ENCODE measurements at regions of chrX and their contacts with region 1.

Region 1: GRCh38 chrX:134782796-134783195 is 124.5 kb upstream of the PLAC1 start:
- DNase-seq: no peak
- ATAC-seq: no peak

Region 2: DNA sequence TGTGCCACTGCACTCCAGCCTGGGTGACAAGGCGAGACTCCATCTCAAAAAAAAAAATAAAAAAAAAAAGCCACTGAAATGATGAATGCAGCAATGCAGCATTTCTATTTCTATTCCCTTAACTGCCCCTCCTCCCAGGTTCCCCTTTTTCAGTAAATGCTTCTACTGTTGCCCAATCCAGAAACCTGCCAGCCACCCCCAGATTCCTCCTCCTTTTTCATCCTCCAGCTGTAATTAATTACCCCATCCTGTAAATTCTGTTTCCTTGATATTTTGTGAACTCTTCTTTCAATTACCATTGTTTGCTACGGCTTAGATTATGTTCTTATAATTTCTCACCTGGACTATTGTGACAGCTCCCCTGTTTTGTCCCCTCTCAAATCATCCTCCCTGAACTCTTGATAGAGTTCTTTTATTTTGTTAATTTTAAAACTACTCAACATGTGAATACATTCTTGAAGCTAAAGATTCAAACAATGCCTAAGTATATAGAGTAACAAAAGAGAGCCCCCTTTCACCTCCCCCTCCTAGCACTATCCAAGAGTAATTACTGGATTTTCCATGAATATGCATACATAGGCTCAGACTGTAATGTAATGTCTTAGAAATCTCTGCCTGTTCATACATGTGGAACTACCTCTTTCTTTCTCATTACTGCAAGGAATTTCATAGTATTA is 1226.9 kb before region 1 on chrX:
- intact Hi-C with region 1: no loop called
- DNase-seq: no peak
- ATAC-seq: no peak

Region 3: DNA sequence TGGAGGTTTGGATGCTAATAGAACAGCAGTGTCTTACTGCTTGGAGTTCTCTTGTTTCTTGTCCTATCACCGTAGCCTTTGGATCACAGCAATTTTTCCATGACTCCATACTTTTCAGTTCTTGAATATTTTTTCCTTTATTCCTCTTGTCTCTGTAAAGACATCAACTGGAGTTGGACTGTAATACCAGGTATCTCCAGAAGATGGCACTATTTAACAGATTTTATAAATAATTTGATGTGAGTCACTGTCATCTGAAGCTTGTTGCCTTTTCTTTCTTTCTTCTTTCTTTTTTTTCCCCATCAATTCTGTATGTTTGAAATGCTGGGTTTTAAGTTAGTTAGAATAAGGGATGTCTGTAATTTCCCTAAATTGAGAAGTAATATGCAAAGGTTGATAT is 298.8 kb before region 1 on chrX:
- intact Hi-C with region 1: loop called in 1 of 2 experiments (anchors 10 kb)
- DNase-seq: no peak
- ATAC-seq: peak; percentile 35